ENCODE measurements at regions of chrX and their contacts with region 1.

Region 1: GRCh38 chrX:108811891-108812290 is 75.5 kb upstream of the IRS4 start:
- DNase-seq: no peak
- H3K4me3 Mint-ChIP-seq: no peak overlapping the region
- H3K27ac Mint-ChIP-seq: no peak overlapping the region
- H3K4me1 Mint-ChIP-seq: no peaks in the 10 kb centered on the region
- H3K27me3 Mint-ChIP-seq: no peaks in the 10 kb centered on the region

Region 2: DNA sequence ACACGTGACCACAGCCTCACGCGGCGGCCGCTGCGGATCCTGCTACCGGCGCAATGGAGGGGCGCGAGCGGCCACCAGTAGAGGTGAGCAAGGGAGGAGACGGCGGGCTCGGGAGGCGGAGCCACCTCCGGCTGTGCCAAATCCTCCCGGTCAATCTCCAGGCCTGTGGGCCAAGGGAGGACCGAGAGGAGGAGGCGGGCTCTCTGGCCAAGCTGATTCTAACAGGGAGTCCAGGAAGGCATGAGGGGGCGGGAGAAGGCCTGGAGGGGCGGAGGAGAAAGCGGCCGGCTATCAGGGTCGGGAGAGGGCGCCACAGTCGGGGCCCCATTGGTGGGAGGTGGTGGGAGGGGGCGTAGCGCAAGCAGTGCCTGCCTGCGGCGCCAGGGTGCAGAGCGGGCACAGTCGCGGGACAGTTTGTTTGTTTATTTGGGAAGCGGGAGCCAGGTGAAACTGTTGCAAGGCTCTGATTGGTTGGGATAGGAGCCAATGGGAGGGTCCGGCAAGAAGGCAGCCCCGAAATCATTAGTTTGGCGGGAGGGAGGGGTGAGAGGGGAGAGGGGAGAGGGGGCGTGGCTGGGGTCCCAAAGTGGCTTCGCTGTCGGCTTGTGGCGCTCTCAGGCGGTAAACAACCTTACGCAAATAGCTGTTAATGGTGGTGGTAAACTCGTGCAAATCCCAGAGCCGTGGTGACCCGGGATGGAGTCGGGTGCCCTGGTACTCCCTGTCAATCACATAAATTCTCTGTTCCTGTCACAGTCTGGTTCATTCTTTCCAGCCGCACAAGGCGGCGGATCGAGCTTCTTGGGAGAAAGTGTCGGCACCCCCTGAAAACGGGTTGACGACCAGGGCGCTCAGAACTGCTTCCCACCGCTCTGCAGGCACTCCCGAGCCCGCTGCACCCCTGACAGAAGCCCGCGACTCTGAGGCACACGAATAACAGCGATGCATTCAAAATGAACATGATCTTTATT is 75.1 kb before region 1 on chrX and contains the start of gene IRS4:
- intact Hi-C with region 1: loop called (anchors 10 kb)
- DNase-seq: no peak
- H3K4me3 Mint-ChIP-seq: no peak within 1 kb of the TSS
- H3K27ac Mint-ChIP-seq: no peak within 1 kb of the TSS
- H3K4me1 Mint-ChIP-seq: no peaks in the 10 kb centered on the region
- H3K27me3 Mint-ChIP-seq: peaks cover 47% of the 10 kb centered on the region
- total RNA-seq, gene IRS4: 0.05 and 0.09 TPM in 2 replicates